ENCODE measurements at regions of chr6 and their contacts with region 1.

Region 1: GRCh38 chr6:10555625-10556309 is 34.6 kb downstream of the GCNT2 start:
- DNase-seq: peak; percentile 88
- H3K4me3 ChIP-seq: peak overlapping the region; percentile 25 to 28
- H3K27ac ChIP-seq: peak overlapping the region; percentile 69 to 76
- H3K4me1 ChIP-seq: peaks cover 7% of the 10 kb centered on the region
- H3K27me3 ChIP-seq: no peaks in the 10 kb centered on the region
- CTCF ChIP-seq: no peak
- POLR2A ChIP-seq: no peak

Region 2: GRCh38 chr6:9789201-9789600 is 766.6 kb before region 1 on chr6:
- intact Hi-C with region 1: no loop called
- DNase-seq: no peak
- H3K4me3 ChIP-seq: no peak overlapping the region
- H3K27ac ChIP-seq: no peak overlapping the region
- H3K4me1 ChIP-seq: no peaks in the 10 kb centered on the region
- H3K27me3 ChIP-seq: no peaks in the 10 kb centered on the region
- CTCF ChIP-seq: no peak
- POLR2A ChIP-seq: no peak

Region 3: GRCh38 chr6:10363911-10364310 is 191.9 kb before region 1 on chr6:
- intact Hi-C with region 1: no loop called
- DNase-seq: no peak
- H3K4me3 ChIP-seq: no peak overlapping the region
- H3K27ac ChIP-seq: no peak overlapping the region
- H3K4me1 ChIP-seq: no peaks in the 10 kb centered on the region
- H3K27me3 ChIP-seq: no peaks in the 10 kb centered on the region
- CTCF ChIP-seq: no peak
- POLR2A ChIP-seq: no peak

Region 4: GRCh38 chr6:10609995-10610688 is 54.4 kb after region 1 on chr6:
- intact Hi-C with region 1: loop called (anchors 5 kb)
- DNase-seq: peak; percentile 24
- H3K4me3 ChIP-seq: no peak overlapping the region
- H3K27ac ChIP-seq: peak overlapping the region in 1 of 2 donors; percentile 80
- H3K4me1 ChIP-seq: peaks cover 5% of the 10 kb centered on the region
- H3K27me3 ChIP-seq: no peaks in the 10 kb centered on the region
- CTCF ChIP-seq: no peak
- POLR2A ChIP-seq: no peak

Measured in prostate gland (tissue), 2 donors.